ENCODE measurements at regions of chr6 and their contacts with region 1.

Region 1: DNA sequence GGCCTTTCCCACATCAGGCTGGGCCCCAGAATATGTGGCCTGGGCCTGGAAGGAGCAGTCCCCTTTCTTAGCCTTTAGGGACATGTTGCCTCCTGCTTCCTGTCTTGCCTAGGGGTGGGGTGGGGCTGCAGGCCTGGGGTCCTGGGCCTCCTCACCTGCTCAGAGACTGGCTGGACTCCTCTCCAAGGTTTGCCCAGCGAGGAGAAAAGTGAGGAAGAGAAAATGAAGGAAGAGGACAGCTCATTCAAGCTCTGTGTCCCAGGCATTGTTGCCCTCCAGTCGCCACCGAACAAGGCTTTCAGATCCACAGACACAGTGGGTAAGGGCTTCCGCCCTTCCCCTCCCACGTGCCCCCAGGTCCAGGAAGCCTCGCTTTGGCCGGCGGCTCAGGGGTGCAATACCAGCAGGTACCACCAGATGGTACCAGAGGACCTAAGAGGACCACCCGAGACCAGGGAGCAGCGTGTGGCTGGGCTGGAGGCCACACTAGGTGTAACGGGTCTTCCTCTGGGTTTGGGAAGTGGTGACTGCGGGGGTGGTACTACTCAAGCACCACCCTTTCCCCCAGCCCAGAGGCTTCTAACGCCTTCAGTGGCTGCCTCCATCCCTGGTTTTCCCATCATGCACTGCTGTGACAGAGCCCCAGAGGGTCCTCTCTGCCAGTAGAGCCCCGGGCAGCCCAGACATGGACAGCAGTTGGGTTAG is 5.5 kb upstream of the BAK1 start:
- DNase-seq: peak in 1 of 2 experiments; percentile 96
- H3K4me3 ChIP-seq: no peak overlapping the region; a peak in 1 of 8 replicates
- H3K27ac ChIP-seq: no peak overlapping the region
- H3K4me1 ChIP-seq: peaks cover 5 to 15% (median 10%) of the 10 kb centered on the region in 4 experiments
- H3K27me3 ChIP-seq: no peaks in the 10 kb centered on the region
- CTCF ChIP-seq: peak in 2 of 3 experiments; percentile 86 to 94; a peak in 3 of 4 replicates
- EP300 ChIP-seq: no peak
- POLR2A ChIP-seq: no peak
- RAD21 ChIP-seq: peak; percentile 95 to 97

Region 2: DNA sequence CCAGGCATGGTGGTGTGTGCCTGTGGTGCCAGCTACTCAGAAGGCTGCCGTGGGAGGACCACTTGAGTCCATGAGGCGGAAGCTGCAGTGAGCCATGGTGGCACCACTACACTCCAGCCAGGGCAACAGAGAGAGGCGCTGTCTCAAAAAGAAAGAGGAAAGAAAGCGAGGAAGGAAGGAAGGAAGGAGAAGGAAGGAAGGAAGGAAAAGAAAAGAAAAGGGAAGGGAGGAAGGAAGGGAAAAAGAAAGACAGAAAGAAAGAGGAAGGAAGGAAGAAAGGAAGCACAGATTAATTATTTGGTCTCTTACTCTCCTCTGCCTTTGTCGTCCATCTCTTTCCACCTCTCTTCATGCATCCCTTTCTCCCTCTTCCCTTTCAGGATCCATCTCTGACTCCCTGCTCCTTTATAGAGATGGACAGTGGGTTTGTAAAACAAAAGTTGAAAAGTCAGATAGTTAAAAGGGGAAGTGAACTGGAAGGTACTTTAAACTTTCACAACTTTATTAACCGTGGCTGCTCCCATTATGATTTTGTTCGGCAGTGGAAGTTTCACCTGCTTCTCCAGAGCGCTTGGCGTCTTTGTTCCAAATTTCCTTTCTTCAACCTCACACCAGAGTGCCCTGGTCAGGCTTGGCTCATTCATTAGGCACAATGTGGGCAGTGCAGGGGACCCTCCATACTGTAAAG is 946.9 kb before region 1 on chr6:
- CTCF ChIA-PET with region 1: no interaction called
- POLR2A ChIA-PET with region 1: no interaction called
- DNase-seq: no peak
- H3K4me3 ChIP-seq: no peak overlapping the region
- H3K27ac ChIP-seq: no peak overlapping the region
- H3K4me1 ChIP-seq: no peaks in the 10 kb centered on the region
- H3K27me3 ChIP-seq: no peaks in the 10 kb centered on the region
- CTCF ChIP-seq: no peak
- EP300 ChIP-seq: no peak
- POLR2A ChIP-seq: no peak
- RAD21 ChIP-seq: no peak

Region 3: GRCh38 chr6:33467091-33467490 is 118.5 kb before region 1 on chr6:
- CTCF ChIA-PET with region 1: no interaction called
- POLR2A ChIA-PET with region 1: no interaction called
- DNase-seq: no peak
- H3K4me3 ChIP-seq: no peak overlapping the region
- H3K27ac ChIP-seq: no peak overlapping the region
- H3K4me1 ChIP-seq: no peaks in the 10 kb centered on the region
- H3K27me3 ChIP-seq: no peaks in the 10 kb centered on the region
- CTCF ChIP-seq: no peak
- EP300 ChIP-seq: no peak
- POLR2A ChIP-seq: no peak
- RAD21 ChIP-seq: no peak

Region 4: GRCh38 chr6:33570806-33571636 is 14.5 kb before region 1 on chr6:
- CTCF ChIA-PET with region 1: interaction called, 21 read pairs
- POLR2A ChIA-PET with region 1: interaction called, 3 read pairs
- DNase-seq: peak in 1 of 2 experiments; percentile 86
- H3K4me3 ChIP-seq: peak overlapping the region; percentile 50 to 79 (median 68)
- H3K27ac ChIP-seq: no peak overlapping the region
- H3K4me1 ChIP-seq: peaks cover 0 to 5% (median 2%) of the 10 kb centered on the region in 4 experiments; a peak in 3 of 7 replicates
- H3K27me3 ChIP-seq: no peaks in the 10 kb centered on the region
- CTCF ChIP-seq: no peak
- EP300 ChIP-seq: no peak
- POLR2A ChIP-seq: 0 out of 3 replicates have a peak, but pooled peaks of 1 of the 2 experiments have one; percentile 34
- RAD21 ChIP-seq: peak in 1 of 2 experiments; percentile 8; a peak in 1 of 4 replicates

Region 5: DNA sequence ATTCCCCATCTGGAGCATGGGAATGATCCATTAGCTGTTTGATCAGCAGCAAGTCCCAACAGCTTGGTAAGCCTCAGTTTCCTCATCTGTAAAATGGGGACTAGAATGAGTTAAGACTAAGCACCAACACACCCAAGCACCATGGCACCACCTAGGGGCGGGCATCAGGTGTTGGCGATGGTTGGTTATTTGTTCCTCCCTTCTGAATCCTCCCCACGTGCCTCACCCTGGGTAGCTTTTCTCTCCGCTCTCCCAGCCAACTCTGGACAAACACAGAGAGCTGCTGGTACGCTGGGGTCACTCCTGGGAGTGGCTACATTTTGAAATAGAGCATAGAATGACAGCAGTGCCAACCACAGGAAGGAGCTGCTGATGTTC is 22.2 kb after region 1 on chr6:
- CTCF ChIA-PET with region 1: interaction called, 42 read pairs
- POLR2A ChIA-PET with region 1: interaction called, 3 read pairs
- DNase-seq: no peak
- H3K4me3 ChIP-seq: no peak overlapping the region
- H3K27ac ChIP-seq: no peak overlapping the region
- H3K4me1 ChIP-seq: peaks cover 6 to 42% (median 26%) of the 10 kb centered on the region in 4 experiments
- H3K27me3 ChIP-seq: no peaks in the 10 kb centered on the region
- CTCF ChIP-seq: peak; percentile 38 to 63 (median 61); a peak in 3 of 4 replicates
- EP300 ChIP-seq: no peak
- POLR2A ChIP-seq: no peak
- RAD21 ChIP-seq: peak; percentile 60 to 63

Region 6: DNA sequence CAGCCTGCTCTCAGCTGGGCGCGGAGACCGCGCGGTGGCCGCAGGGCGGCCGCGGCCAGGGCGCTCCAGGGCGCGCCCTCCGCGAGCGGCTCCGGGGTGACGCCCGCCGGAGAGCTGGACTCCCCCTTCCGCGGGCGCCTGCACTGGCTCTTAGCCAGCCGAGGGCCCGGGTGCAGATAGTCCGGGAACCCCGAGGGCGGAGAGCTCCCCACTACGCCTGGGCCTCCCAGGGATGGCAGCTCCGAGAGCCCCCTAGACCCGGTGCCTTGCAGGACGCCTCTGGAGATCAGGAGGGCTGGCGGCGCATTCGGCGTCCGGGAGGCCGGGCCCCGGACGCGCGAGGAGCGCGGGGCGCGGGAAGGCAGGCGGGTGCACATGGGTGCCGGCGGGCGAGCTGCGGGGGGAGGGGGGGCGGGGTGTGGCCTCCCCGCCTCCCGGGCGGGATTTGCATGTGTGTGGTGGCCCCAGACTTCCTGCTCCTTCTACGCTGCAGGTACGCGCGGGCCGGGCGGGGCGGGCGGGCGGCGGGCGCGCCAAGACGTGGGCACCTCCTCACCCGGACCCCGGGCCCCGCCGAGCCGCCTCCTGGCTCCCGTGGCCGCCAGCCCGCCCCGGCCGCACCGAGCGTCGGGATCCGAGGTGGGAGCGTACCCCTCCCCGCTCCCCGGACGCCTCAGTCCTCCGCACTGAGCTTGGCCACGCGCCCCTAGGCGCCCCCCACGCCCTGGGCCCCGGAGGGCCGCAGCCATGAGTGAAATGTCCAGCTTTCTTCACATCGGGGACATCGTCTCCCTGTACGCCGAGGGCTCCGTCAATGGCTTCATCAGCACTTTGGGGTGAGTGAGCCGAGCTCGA is 35.5 kb after region 1 on chr6 and contains the start of gene ITPR3:
- CTCF ChIA-PET with region 1: interaction called, 70 read pairs
- POLR2A ChIA-PET with region 1: interaction called, 3 read pairs
- DNase-seq: peak in 1 of 2 experiments; percentile 79
- H3K4me3 ChIP-seq: peak within 1 kb of the TSS; percentile 70 to 85 (median 80)
- H3K27ac ChIP-seq: no peak within 1 kb of the TSS
- H3K4me1 ChIP-seq: peaks cover 6 to 15% (median 11%) of the 10 kb centered on the region in 4 experiments
- H3K27me3 ChIP-seq: peaks cover 0 to 3% (median 1%) of the 10 kb centered on the region in 4 experiments; a peak in 3 of 7 replicates
- CTCF ChIP-seq: no peak
- EP300 ChIP-seq: no peak
- POLR2A ChIP-seq: no peak
- RAD21 ChIP-seq: no peak
- total RNA-seq, gene ITPR3: 44.9 and 45.7 TPM in 2 replicates

Region 7: DNA sequence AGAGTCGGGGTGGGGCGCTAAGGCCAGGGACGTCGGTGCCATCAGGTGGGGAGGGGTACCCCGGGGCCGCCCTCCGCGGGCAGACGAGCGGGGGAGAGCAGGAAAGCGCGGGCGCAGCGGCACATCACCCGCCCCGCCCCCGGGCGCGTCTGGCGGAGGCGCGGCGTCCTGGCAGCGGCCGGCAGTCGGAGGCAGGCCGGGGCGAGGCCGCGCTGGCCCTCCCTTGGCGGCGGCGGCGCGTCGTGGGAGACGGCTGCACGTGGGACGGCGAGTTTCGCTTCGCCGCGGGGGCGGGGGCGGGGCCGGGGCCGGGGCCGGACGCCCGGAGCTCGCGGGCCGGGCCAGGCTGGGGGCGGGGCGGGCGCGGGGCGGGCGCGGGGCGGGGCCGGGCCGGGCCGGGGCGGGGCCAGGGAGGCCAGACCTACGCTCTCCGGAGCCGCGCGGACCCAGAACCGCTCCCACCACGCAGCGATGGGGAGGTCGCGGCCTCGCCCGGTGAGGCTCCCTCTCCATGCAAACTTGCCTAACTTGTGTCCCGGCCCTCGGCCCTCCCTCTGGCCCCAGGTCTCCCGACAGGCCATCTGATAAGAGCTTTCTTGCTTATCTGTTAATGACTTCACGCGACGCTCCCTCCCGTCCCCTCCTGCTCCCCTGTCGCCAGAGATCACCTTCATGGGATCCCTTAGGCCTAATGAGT is 48.1 kb after region 1 on chr6:
- CTCF ChIA-PET with region 1: interaction called, 94 read pairs
- POLR2A ChIA-PET with region 1: interaction called, 7 read pairs
- DNase-seq: peak in 1 of 2 experiments; percentile 80
- H3K4me3 ChIP-seq: peak overlapping the region; percentile 35 to 70 (median 66)
- H3K27ac ChIP-seq: no peak overlapping the region
- H3K4me1 ChIP-seq: peaks cover 8 to 31% (median 13%) of the 10 kb centered on the region in 4 experiments
- H3K27me3 ChIP-seq: no peaks in the 10 kb centered on the region; a peak in 2 of 7 replicates
- CTCF ChIP-seq: no peak
- EP300 ChIP-seq: no peak
- POLR2A ChIP-seq: no peak
- RAD21 ChIP-seq: no peak

Region 8: DNA sequence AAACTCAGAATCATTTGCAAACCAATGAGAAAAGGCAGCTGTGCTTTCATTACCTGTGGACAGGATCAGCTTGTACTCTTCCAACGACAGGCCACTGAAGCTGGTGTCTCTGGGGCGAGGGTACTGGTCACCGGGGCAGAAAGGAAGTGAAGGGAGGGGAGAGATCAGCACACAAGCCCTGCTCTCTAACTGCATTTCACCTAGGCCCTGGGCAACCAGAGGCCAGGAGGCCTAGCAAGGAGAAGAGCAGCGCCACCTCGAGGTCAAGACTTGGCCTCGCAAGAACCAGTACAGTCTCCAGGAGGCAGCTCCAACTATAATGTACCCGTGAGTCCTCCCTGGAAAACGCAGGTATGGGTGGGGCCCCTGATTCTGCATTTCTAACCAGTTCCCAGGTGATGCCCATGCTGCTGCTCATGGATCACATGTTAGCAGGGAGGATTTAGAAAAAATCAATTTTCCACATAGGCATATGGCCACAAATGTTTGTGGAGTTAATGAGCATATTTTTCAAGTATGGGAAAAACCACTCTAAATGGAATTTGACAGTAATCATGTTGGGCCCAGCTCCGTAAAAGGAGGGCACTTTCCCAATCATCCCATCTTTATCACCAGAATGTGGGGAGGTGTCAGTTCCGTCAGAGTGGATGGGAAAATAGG is 115.0 kb after region 1 on chr6:
- CTCF ChIA-PET with region 1: interaction called, 47 read pairs
- POLR2A ChIA-PET with region 1: interaction called, 4 read pairs
- DNase-seq: peak; percentile 63 to 84
- H3K4me3 ChIP-seq: no peak overlapping the region
- H3K27ac ChIP-seq: no peak overlapping the region
- H3K4me1 ChIP-seq: peaks cover 0 to 5% (median 0%) of the 10 kb centered on the region in 4 experiments; a peak in 2 of 7 replicates
- H3K27me3 ChIP-seq: no peaks in the 10 kb centered on the region
- CTCF ChIP-seq: peak in 2 of 3 experiments; percentile 92 to 98; a peak in 3 of 4 replicates
- EP300 ChIP-seq: no peak
- POLR2A ChIP-seq: no peak
- RAD21 ChIP-seq: peak; percentile 80 to 82